SK-N-SH (cell line): ENCODE measurements at regions of chr17 and their contacts with region 1.

Region 1: GRCh38 chr17:60231234-60231633 is 81.5 kb downstream of the CA4 start:
- DNase-seq: peak; percentile 53
- H3K4me3 ChIP-seq: no peak overlapping the region; a peak in 1 of 4 replicates
- H3K27ac ChIP-seq: peak overlapping the region in 1 of 2 experiments; percentile 58; a peak in 2 of 4 replicates
- H3K4me1 ChIP-seq: peaks cover 0 to 7% of the 10 kb centered on the region in 2 experiments; a peak in 2 of 4 replicates
- H3K27me3 ChIP-seq: no peaks in the 10 kb centered on the region
- CTCF ChIP-seq: peak; percentile 73
- EP300 ChIP-seq: no peak
- RAD21 ChIP-seq: peak; percentile 78

Region 2: DNA sequence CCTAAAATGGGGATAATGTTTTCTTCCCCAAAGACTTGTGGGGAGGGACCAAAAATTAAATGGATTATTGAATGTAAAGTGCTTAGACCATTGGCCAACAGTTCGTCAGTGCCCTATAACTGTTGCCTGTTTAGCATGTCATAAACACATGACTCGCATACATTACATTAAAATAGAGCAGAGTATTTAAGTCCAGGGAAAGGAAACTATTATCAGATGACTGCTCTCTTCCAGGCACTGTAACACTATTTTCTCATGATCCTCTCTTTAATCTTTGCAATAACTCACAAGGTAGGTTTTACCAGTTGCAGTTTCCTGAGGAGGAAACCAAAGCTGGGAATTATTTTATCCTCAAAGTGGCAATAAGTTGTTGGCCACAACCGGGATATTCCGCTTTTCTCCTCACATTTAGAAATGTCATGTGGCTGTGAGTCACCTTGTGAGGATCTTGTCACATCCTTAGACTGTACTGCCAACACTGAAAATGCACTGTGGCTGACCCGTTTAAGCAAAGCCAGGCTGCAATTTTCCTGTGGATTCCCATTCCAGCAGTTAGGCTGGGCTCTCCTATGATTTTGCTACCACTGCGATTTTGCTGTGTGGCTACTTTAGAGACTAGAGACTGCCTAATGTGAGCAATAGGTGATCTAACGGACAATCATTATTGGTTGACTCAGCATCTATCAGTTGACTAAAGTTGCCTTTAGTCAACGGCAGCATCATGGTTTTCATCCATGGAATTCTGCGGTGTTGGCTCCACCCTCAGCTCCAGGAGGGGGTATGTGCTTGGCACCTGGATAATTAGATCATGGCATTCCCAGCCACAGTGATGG is 724.1 kb before region 1 on chr17:
- CTCF ChIA-PET with region 1: no interaction called
- POLR2A ChIA-PET with region 1: no interaction called
- DNase-seq: no peak
- H3K4me3 ChIP-seq: no peak overlapping the region
- H3K27ac ChIP-seq: 0 out of 4 replicates have a peak overlapping the region, but pooled peaks of 1 of the 2 experiments have one; percentile 2
- H3K4me1 ChIP-seq: no peaks in the 10 kb centered on the region; a peak in 1 of 4 replicates
- H3K27me3 ChIP-seq: no peaks in the 10 kb centered on the region
- CTCF ChIP-seq: no peak
- EP300 ChIP-seq: no peak
- RAD21 ChIP-seq: no peak

Region 3: GRCh38 chr17:60142872-60143499 is 88.2 kb before region 1 on chr17:
- CTCF ChIA-PET with region 1: interaction called, 22 read pairs
- POLR2A ChIA-PET with region 1: interaction called, 4 read pairs
- DNase-seq: peak; percentile 84
- H3K4me3 ChIP-seq: peak overlapping the region; percentile 35 to 57; a peak in 3 of 4 replicates
- H3K27ac ChIP-seq: peak overlapping the region in 1 of 2 experiments; percentile 83; a peak in 2 of 4 replicates
- H3K4me1 ChIP-seq: peaks cover 9 to 13% of the 10 kb centered on the region in 2 experiments; a peak in 3 of 4 replicates
- H3K27me3 ChIP-seq: no peaks in the 10 kb centered on the region
- CTCF ChIP-seq: peak; percentile 99
- EP300 ChIP-seq: no peak
- RAD21 ChIP-seq: peak; percentile 94

Region 4: GRCh38 chr17:60151355-60152065 is 79.7 kb before region 1 on chr17:
- CTCF ChIA-PET with region 1: interaction called, 14 read pairs
- POLR2A ChIA-PET with region 1: no interaction called
- DNase-seq: no peak
- H3K4me3 ChIP-seq: no peak overlapping the region
- H3K27ac ChIP-seq: no peak overlapping the region
- H3K4me1 ChIP-seq: peaks cover 11 to 12% of the 10 kb centered on the region in 2 experiments; a peak in 2 of 4 replicates
- H3K27me3 ChIP-seq: peaks cover 28% of the 10 kb centered on the region
- CTCF ChIP-seq: no peak
- EP300 ChIP-seq: no peak
- RAD21 ChIP-seq: no peak

Region 5: GRCh38 chr17:60193482-60193881 is 37.8 kb before region 1 on chr17:
- CTCF ChIA-PET with region 1: interaction called, 10 read pairs
- POLR2A ChIA-PET with region 1: no interaction called
- DNase-seq: no peak
- H3K4me3 ChIP-seq: no peak overlapping the region
- H3K27ac ChIP-seq: no peak overlapping the region
- H3K4me1 ChIP-seq: peaks cover 0 to 5% of the 10 kb centered on the region in 2 experiments; a peak in 2 of 4 replicates
- H3K27me3 ChIP-seq: no peaks in the 10 kb centered on the region
- CTCF ChIP-seq: no peak
- EP300 ChIP-seq: no peak
- RAD21 ChIP-seq: no peak

Region 6: DNA sequence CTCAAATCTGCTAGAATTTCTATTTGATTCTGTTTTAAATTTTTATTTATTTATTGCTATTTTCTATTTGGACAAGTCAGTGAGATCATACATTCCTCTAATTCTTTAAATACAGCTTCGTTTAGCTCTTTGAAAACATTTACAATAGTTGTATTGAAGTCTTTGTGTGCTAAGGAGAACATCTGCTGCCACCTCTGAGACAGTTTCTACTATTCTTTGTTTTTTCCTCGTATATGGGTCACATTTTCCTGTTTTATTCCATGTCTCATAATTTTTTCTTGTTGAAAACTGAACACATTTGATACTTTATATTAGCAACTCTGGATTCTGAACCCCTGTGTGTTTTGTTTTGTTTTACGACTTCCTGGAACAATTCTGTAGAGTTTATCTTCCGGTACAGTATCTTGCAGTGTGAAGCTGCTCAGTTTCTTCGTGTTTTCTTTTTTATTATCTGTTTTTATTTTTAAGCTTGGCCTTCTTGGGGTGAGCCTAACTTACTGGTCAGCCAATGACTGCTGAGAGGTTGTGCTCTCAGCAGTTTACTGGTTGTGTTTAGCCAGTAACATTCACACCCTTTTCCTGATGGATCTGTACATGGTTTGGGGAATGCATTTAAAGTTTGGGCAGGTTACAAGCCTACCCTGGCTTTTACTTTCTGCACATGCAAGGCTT is 17.5 kb after region 1 on chr17:
- CTCF ChIA-PET with region 1: interaction called, 54 read pairs
- POLR2A ChIA-PET with region 1: no interaction called
- DNase-seq: no peak
- H3K4me3 ChIP-seq: no peak overlapping the region
- H3K27ac ChIP-seq: no peak overlapping the region
- H3K4me1 ChIP-seq: no peaks in the 10 kb centered on the region
- H3K27me3 ChIP-seq: no peaks in the 10 kb centered on the region
- CTCF ChIP-seq: no peak
- EP300 ChIP-seq: no peak
- RAD21 ChIP-seq: no peak

Region 7: GRCh38 chr17:60392042-60392844 is 161.0 kb after region 1 on chr17 and contains the start of gene USP32:
- CTCF ChIA-PET with region 1: interaction called, 13 read pairs
- POLR2A ChIA-PET with region 1: interaction called, 5 read pairs
- DNase-seq: peak; percentile 98
- H3K4me3 ChIP-seq: peak within 1 kb of the TSS; percentile 65 to 86
- H3K27ac ChIP-seq: peak within 1 kb of the TSS; percentile 98 to 99
- H3K4me1 ChIP-seq: peaks cover 12 to 19% of the 10 kb centered on the region in 2 experiments
- H3K27me3 ChIP-seq: no peaks in the 10 kb centered on the region
- CTCF ChIP-seq: peak; percentile 35
- EP300 ChIP-seq: peak in 1 of 2 experiments; percentile 33; a peak in 1 of 4 replicates
- RAD21 ChIP-seq: peak; percentile 7; the same call in 1 of the 2 replicates
- polyA plus RNA-seq, gene USP32: 25.6 and 31.8 TPM in 2 replicates

Region 8: GRCh38 chr17:60435244-60436167 is 204.3 kb after region 1 on chr17:
- CTCF ChIA-PET with region 1: interaction called, 10 read pairs
- POLR2A ChIA-PET with region 1: no interaction called
- DNase-seq: peak; percentile 85
- H3K4me3 ChIP-seq: no peak overlapping the region; a peak in 1 of 4 replicates
- H3K27ac ChIP-seq: peak overlapping the region in 1 of 2 experiments; percentile 33; a peak in 1 of 4 replicates
- H3K4me1 ChIP-seq: peaks cover 0 to 4% of the 10 kb centered on the region in 2 experiments; a peak in 1 of 4 replicates
- H3K27me3 ChIP-seq: no peaks in the 10 kb centered on the region
- CTCF ChIP-seq: peak; percentile 99
- EP300 ChIP-seq: no peak; a peak in 1 of 4 replicates
- RAD21 ChIP-seq: peak; percentile 100